Activated CD8-positive, alpha-beta memory T cell treated with anti-CD3 and anti-CD28 coated beads, Interleukin-2, amount 10 ng/mL, durations not matched to agents 7 days and 5 days (primary cell): ENCODE measurements at regions of chr10 and their contacts with region 1.

Region 1: GRCh38 chr10:80057171-80057570 is 21.3 kb upstream of the TMEM254 start:
- DNase-seq: no peak
- ATAC-seq: no peak
- H3K4me3 Mint-ChIP-seq: no peak overlapping the region
- H3K27ac Mint-ChIP-seq: no peak overlapping the region
- H3K4me1 Mint-ChIP-seq: no peaks in the 10 kb centered on the region
- H3K27me3 Mint-ChIP-seq: no peaks in the 10 kb centered on the region

Region 2: GRCh38 chr10:80132299-80133139 is 75.3 kb after region 1 on chr10 and contains the start of gene PLAC9:
- CTCF ChIA-PET with region 1: interaction called, 10 read pairs
- DNase-seq: no peak
- ATAC-seq: peak; percentile 20
- H3K4me3 Mint-ChIP-seq: no peak within 1 kb of the TSS
- H3K27ac Mint-ChIP-seq: no peak within 1 kb of the TSS
- H3K4me1 Mint-ChIP-seq: peaks cover 4% of the 10 kb centered on the region
- H3K27me3 Mint-ChIP-seq: peaks cover 37% of the 10 kb centered on the region
- total RNA-seq, gene PLAC9: not detected